GM10248 (cell line): ENCODE measurements at regions of chr10 and their contacts with region 1.

Region 1: GRCh38 chr10:94320285-94320914 is 42.3 kb downstream of the NOC3L start:
- DNase-seq: peak; percentile 51
- CTCF ChIP-seq: peak; percentile 81

Region 2: GRCh38 chr10:93916257-93917063 is 403.9 kb before region 1 on chr10:
- CTCF ChIA-PET with region 1: interaction called, 39 read pairs
- POLR2A ChIA-PET with region 1: no interaction called
- DNase-seq: no peak
- CTCF ChIP-seq: peak; percentile 47

Region 3: DNA sequence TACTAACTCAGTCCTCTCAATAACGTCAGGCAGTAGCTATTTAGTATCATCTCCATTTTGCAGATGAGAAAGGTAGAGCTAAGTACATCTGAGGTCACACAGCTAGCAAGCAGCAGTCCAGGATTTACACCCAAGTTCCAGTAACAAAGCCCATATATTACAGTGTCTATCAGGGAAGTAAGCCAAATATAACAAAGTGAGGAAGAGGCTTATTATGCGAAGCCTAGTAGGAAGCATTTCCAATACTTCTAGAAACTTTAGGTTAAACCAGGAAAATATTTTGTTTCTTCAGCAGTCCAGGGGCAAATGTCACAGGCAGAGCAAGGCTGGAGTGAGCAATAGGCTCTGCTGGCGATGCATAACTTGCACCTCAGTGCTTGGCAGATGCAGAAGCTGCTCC is 11.5 kb before region 1 on chr10:
- CTCF ChIA-PET with region 1: interaction called, 74 read pairs
- POLR2A ChIA-PET with region 1: no interaction called
- DNase-seq: no peak
- CTCF ChIP-seq: no peak

Region 4: DNA sequence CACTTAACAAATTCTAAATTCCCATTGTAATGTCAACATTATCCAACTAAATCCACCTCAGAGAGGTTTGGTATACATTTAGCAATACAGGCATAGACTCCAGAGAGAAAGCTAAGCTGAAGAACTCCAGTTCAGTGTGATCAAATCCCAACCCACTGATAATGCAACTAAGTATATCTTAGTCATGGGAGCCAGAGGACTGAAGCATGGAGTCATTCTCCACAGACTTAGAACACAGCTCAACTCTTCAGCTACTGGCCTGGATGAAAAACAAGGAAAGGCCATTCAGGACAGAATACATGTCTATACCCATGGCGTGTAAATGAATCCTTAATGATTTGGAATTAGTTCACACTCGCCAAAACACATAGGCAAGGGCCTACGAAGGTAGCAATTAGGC is 14.5 kb after region 1 on chr10:
- CTCF ChIA-PET with region 1: interaction called, 90 read pairs
- POLR2A ChIA-PET with region 1: no interaction called
- DNase-seq: no peak
- CTCF ChIP-seq: no peak

Region 5: GRCh38 chr10:94344522-94345122 is 24.2 kb after region 1 on chr10:
- CTCF ChIA-PET with region 1: interaction called, 24 read pairs
- POLR2A ChIA-PET with region 1: no interaction called
- DNase-seq: peak; percentile 59
- CTCF ChIP-seq: no peak

Region 6: DNA sequence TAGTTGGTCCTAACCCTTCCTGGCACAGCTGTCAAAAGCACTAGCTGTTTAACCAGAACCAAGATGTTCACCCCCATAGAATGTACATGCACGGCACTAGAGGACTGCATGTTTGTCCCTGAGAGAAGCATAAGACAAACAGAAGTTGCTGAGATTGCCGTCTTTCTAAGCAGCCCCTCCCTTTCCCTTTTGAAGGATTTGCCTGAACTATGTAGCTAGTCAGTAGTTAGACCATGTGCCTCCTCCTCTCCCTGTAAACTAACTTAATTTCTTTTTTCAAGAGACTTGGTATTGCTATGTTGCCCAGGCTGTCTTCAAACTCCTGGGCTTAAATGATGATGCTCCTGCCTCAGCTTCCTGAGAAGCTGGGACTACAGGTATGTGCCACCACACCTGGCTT is 122.6 kb after region 1 on chr10:
- CTCF ChIA-PET with region 1: interaction called, 11 read pairs
- POLR2A ChIA-PET with region 1: no interaction called
- DNase-seq: no peak
- CTCF ChIP-seq: no peak